ENCODE measurements at regions of chr7 and their contacts with region 1.

Region 1: GRCh38 chr7:116647866-116648265 is 24.1 kb upstream of the MET start:
- DNase-seq: no peak
- H3K4me3 ChIP-seq: no peak overlapping the region
- H3K27ac ChIP-seq: no peak overlapping the region
- H3K4me1 ChIP-seq: no peaks in the 10 kb centered on the region
- H3K27me3 ChIP-seq: no peaks in the 10 kb centered on the region
- CTCF ChIP-seq: no peak

Region 2: DNA sequence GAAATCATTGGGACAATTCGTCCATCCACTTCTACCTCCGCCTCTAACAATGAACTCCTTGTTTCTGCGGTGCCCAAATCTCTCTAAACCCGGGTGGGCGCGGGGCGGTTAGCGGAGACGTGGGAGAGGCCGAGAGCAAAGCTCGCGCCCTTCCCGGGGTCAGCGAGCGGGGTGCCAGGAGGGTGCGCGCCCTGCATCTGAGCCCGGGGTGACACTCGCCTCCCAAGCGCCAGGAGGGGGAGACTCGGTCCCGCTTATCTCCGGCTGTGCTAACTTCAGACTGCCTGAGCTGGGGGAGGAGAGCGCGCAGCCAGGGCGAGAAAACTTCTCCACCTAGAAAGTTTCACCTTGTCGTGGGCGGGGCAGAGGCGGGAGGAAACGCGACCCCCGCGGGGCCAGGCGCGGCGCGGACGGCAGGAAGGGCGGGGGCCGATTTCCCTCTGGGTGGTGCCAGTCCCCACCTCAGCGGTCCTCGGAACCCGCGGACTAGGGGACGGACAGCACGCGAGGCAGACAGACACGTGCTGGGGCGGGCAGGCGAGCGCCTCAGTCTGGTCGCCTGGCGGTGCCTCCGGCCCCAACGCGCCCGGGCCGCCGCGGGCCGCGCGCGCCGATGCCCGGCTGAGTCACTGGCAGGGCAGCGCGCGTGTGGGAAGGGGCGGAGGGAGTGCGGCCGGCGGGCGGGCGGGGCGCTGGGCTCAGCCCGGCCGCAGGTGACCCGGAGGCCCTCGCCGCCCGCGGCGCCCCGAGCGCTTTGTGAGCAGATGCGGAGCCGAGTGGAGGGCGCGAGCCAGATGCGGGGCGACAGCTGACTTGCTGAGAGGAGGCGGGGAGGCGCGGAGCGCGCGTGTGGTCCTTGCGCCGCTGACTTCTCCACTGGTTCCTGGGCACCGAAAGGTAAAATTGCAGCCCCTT is 24.1 kb after region 1 on chr7 and contains the start of gene MET:
- CTCF ChIA-PET with region 1: no interaction called
- POLR2A ChIA-PET with region 1: no interaction called
- intact Hi-C with region 1: loop called (anchors 2 kb)
- DNase-seq: peak; percentile 82
- H3K4me3 ChIP-seq: peak within 1 kb of the TSS; percentile 64
- H3K27ac ChIP-seq: no peak within 1 kb of the TSS
- H3K4me1 ChIP-seq: no peaks in the 10 kb centered on the region
- H3K27me3 ChIP-seq: no peaks in the 10 kb centered on the region
- CTCF ChIP-seq: peak; percentile 69
- total RNA-seq, gene MET: 5.7 and 6.8 TPM in 2 replicates

Region 3: GRCh38 chr7:117818232-117818631 is 1170.4 kb after region 1 on chr7:
- CTCF ChIA-PET with region 1: no interaction called
- POLR2A ChIA-PET with region 1: no interaction called
- intact Hi-C with region 1: no loop called
- DNase-seq: no peak
- H3K4me3 ChIP-seq: no peak overlapping the region
- H3K27ac ChIP-seq: no peak overlapping the region
- H3K4me1 ChIP-seq: peaks cover 13% of the 10 kb centered on the region
- H3K27me3 ChIP-seq: no peaks in the 10 kb centered on the region
- CTCF ChIP-seq: no peak